ENCODE measurements at regions of chr1 and their contacts with region 1.

Region 1: GRCh38 chr1:29513357-29513756 is 277.0 kb downstream of the PTPRU start:
- DNase-seq: peak; percentile 84
- ATAC-seq: peak; percentile 100
- H3K4me3 ChIP-seq: no peak overlapping the region
- H3K27ac ChIP-seq: no peak overlapping the region
- H3K4me1 ChIP-seq: no peaks in the 10 kb centered on the region
- H3K27me3 ChIP-seq: peaks cover 25% of the 10 kb centered on the region
- CTCF ChIP-seq: peak; percentile 80 to 89 (median 82)
- POLR2A ChIP-seq: no peak
- RAD21 ChIP-seq: peak; percentile 99

Region 2: GRCh38 chr1:29235955-29236684 is 277.2 kb before region 1 on chr1 and contains the start of gene PTPRU:
- CTCF ChIA-PET with region 1: no interaction called
- POLR2A ChIA-PET with region 1: no interaction called
- RAD21 ChIA-PET with region 1: no interaction called
- intact Hi-C with region 1: loop called (anchors 5 kb)
- DNase-seq: no peak
- ATAC-seq: peak; percentile 77
- H3K4me3 ChIP-seq: peak within 1 kb of the TSS; percentile 89 to 97
- H3K27ac ChIP-seq: peak within 1 kb of the TSS; percentile 53; the same call in 1 of the 2 replicates
- H3K4me1 ChIP-seq: peaks cover 17 to 35% of the 10 kb centered on the region in 2 experiments
- H3K27me3 ChIP-seq: no peaks in the 10 kb centered on the region
- CTCF ChIP-seq: peak; percentile 26 to 53 (median 48); a peak in 3 of 6 replicates
- POLR2A ChIP-seq: no peak
- RAD21 ChIP-seq: peak; percentile 77
- total RNA-seq, gene PTPRU: 40.7 TPM

Region 3: GRCh38 chr1:29290414-29290985 is 222.9 kb before region 1 on chr1:
- CTCF ChIA-PET with region 1: no interaction called
- POLR2A ChIA-PET with region 1: no interaction called
- RAD21 ChIA-PET with region 1: no interaction called
- intact Hi-C with region 1: no loop called
- DNase-seq: no peak
- ATAC-seq: no peak
- H3K4me3 ChIP-seq: no peak overlapping the region
- H3K27ac ChIP-seq: no peak overlapping the region
- H3K4me1 ChIP-seq: no peaks in the 10 kb centered on the region
- H3K27me3 ChIP-seq: no peaks in the 10 kb centered on the region
- CTCF ChIP-seq: no peak
- POLR2A ChIP-seq: no peak
- RAD21 ChIP-seq: no peak

Region 4: DNA sequence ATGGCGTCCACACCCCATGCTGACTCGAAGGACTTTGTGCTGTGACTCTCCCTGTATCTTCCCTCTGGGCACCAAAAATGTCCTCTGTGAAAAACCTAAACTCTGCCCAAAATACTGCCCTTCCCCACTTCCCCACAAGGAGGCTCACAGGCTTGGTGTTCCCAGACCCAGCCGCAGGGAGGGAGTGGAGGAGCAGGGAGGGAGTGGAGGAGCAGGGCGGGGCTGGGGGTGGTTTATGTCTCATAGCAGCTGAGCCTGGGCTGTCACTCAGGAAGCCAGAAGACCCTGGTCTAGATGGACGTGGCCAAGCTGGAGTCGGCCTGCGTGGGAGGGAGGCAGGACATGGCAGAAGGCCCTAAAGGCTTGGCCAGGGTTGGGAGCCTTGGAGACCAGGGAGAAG is 184.7 kb after region 1 on chr1:
- CTCF ChIA-PET with region 1: no interaction called
- POLR2A ChIA-PET with region 1: no interaction called
- RAD21 ChIA-PET with region 1: no interaction called
- intact Hi-C with region 1: loop called (anchors 2 kb)
- DNase-seq: peak; percentile 57
- ATAC-seq: peak; percentile 99
- H3K4me3 ChIP-seq: no peak overlapping the region
- H3K27ac ChIP-seq: no peak overlapping the region
- H3K4me1 ChIP-seq: peaks cover 3 to 9% of the 10 kb centered on the region in 2 experiments; a peak in 2 of 4 replicates
- H3K27me3 ChIP-seq: peaks cover 24% of the 10 kb centered on the region
- CTCF ChIP-seq: peak; percentile 70 to 85 (median 84)
- POLR2A ChIP-seq: no peak
- RAD21 ChIP-seq: peak; percentile 78

Region 5: DNA sequence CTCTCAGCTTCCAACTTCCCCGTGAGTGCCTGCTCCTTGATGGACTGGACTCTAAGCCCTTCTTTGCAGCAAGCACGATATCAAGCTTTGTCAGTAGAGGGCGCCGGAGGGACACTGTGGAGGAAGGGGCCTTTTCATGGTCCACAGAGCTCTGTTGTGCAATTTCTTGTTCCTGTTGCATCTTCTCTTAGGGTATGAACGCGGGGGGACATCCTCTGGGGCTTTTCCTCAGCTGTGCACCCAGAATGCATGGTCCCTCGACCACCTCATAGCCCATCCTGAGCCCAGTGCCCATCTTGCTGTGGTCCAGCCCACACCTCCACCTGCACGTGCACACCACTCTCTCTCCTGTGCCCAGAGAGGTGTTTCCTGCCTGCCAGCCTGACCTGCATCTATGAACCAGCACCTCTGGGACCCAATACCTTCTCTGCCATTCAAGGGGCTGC is 279.8 kb after region 1 on chr1:
- CTCF ChIA-PET with region 1: no interaction called
- POLR2A ChIA-PET with region 1: no interaction called
- RAD21 ChIA-PET with region 1: no interaction called
- intact Hi-C with region 1: loop called (anchors 2 kb)
- DNase-seq: peak; percentile 61
- ATAC-seq: peak; percentile 94
- H3K4me3 ChIP-seq: no peak overlapping the region
- H3K27ac ChIP-seq: no peak overlapping the region
- H3K4me1 ChIP-seq: peaks cover 0 to 11% of the 10 kb centered on the region in 2 experiments; a peak in 2 of 4 replicates
- H3K27me3 ChIP-seq: no peaks in the 10 kb centered on the region
- CTCF ChIP-seq: peak; percentile 85 to 92 (median 90)
- POLR2A ChIP-seq: no peak
- RAD21 ChIP-seq: peak; percentile 91

Region 6: DNA sequence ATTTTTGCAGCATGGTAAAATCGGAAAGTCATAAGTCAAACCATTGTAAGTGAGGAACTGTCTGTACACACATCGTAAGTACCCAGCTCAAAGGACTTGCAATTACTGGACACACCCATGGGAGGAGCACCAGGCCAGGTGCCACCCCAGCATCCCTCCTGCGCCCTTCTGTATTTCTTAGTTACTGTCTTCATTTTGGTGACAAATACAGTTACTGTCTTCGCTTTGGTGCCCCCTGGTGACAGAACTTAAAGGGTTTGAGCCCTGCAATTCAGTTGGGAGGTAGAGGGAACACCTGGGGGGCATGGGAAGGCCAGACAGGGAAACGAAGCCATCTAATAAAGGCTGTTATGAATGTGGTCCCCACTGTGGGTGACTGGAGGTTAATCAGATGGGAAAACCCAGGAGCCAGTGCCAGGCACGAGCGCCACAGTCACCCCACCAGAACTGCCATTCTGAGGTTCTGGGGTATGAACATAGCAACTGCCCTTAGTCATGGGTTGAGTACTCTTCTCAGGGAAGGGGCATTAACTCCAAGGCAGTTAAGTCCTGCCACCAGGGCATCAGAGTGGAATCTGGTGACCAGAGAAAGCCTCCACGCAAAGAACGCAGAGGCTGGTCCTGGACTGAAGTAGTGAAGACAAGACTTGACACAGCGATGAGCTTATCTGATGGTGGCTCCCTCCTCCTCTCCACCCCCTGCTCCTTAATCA is 335.8 kb after region 1 on chr1:
- CTCF ChIA-PET with region 1: interaction called, 6 read pairs
- POLR2A ChIA-PET with region 1: no interaction called
- RAD21 ChIA-PET with region 1: no interaction called
- intact Hi-C with region 1: loop called (anchors 1 kb)
- DNase-seq: no peak
- ATAC-seq: peak; percentile 96
- H3K4me3 ChIP-seq: no peak overlapping the region
- H3K27ac ChIP-seq: no peak overlapping the region
- H3K4me1 ChIP-seq: peaks cover 0 to 5% of the 10 kb centered on the region in 2 experiments; a peak in 3 of 4 replicates
- H3K27me3 ChIP-seq: peaks cover 8% of the 10 kb centered on the region; the same call in 1 of the 2 replicates
- CTCF ChIP-seq: peak; percentile 65 to 91 (median 72)
- POLR2A ChIP-seq: no peak
- RAD21 ChIP-seq: peak; percentile 82

Region 7: GRCh38 chr1:30085811-30086770 is 572.7 kb after region 1 on chr1:
- CTCF ChIA-PET with region 1: interaction called, 3 read pairs
- POLR2A ChIA-PET with region 1: no interaction called
- RAD21 ChIA-PET with region 1: no interaction called
- intact Hi-C with region 1: loop called (anchors 1 kb)
- DNase-seq: no peak
- ATAC-seq: peak; percentile 76
- H3K4me3 ChIP-seq: no peak overlapping the region
- H3K27ac ChIP-seq: no peak overlapping the region
- H3K4me1 ChIP-seq: peaks cover 16 to 31% of the 10 kb centered on the region in 2 experiments
- H3K27me3 ChIP-seq: no peaks in the 10 kb centered on the region
- CTCF ChIP-seq: peak; percentile 81 to 89 (median 86)
- POLR2A ChIP-seq: no peak
- RAD21 ChIP-seq: peak; percentile 83

Region 8: GRCh38 chr1:30106125-30106524 is 592.8 kb after region 1 on chr1:
- CTCF ChIA-PET with region 1: no interaction called
- POLR2A ChIA-PET with region 1: no interaction called
- RAD21 ChIA-PET with region 1: no interaction called
- intact Hi-C with region 1: loop called (anchors 2 kb)
- DNase-seq: no peak
- ATAC-seq: peak; percentile 93
- H3K4me3 ChIP-seq: no peak overlapping the region
- H3K27ac ChIP-seq: no peak overlapping the region
- H3K4me1 ChIP-seq: peaks cover 0 to 4% of the 10 kb centered on the region in 2 experiments; a peak in 1 of 4 replicates
- H3K27me3 ChIP-seq: peaks cover 37% of the 10 kb centered on the region
- CTCF ChIP-seq: peak; percentile 46 to 72 (median 71); a peak in 5 of 6 replicates
- POLR2A ChIP-seq: no peak
- RAD21 ChIP-seq: peak; percentile 54